PC-9 (cell line): ENCODE measurements at regions of chr10 and their contacts with region 1.

Region 1: DNA sequence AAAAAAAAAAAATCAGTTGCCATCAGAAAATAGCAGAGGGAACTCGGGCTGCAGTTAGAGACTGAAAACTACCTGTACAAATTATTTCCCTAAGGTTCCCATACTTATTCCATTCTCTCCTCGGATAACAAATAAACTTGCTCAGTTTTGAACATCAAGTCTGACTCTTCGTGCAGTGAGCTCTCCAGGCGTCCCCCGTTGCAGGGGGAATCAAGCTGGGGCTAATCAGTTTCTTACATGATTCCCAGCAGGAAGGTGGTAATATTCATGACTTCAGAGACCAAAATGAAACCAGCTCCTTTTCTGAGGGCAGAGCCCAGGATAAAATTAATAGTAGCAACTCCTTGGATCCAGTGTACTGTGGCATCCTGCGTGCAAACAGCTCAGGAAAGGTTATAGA is 135.3 kb downstream of the FRMD4A start:
- DNase-seq: no peak
- H3K4me3 ChIP-seq: no peak overlapping the region
- H3K27ac ChIP-seq: no peak overlapping the region
- H3K4me1 ChIP-seq: no peaks in the 10 kb centered on the region
- H3K27me3 ChIP-seq: no peaks in the 10 kb centered on the region
- CTCF ChIP-seq: no peak

Region 2: DNA sequence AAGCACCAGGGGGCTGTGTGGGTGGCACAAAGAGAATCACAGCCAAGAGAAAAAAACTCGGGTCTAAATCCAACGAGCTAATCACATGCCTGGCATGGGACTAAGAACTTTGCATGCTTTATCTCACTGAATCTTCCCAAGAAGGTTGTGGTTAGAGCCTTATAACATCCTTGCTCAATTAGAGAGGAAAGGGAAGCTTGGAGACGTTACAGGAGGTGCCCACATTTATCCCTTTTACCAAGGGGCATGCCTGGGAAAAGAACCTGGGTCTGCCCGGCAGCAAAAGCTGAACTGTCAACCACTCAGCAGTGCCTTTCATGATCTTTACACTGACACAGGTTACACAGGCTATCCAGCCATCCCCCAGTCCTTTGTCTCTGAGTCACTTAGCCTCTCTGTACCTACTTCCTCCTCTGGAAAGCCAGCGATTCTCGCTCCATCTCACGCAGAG is 418.5 kb before region 1 on chr10:
- CTCF ChIA-PET with region 1: no interaction called
- POLR2A ChIA-PET with region 1: no interaction called
- intact Hi-C with region 1: no loop called
- DNase-seq: peak; percentile 20 to 71
- H3K4me3 ChIP-seq: no peak overlapping the region
- H3K27ac ChIP-seq: peak overlapping the region; percentile 16; the same call in 1 of the 2 replicates
- H3K4me1 ChIP-seq: peaks cover 33% of the 10 kb centered on the region
- H3K27me3 ChIP-seq: no peaks in the 10 kb centered on the region
- CTCF ChIP-seq: no peak

Region 3: GRCh38 chr10:13787015-13787421 is 408.4 kb before region 1 on chr10:
- CTCF ChIA-PET with region 1: no interaction called
- POLR2A ChIA-PET with region 1: no interaction called
- intact Hi-C with region 1: loop called (anchors 5 kb)
- DNase-seq: no peak
- H3K4me3 ChIP-seq: no peak overlapping the region
- H3K27ac ChIP-seq: no peak overlapping the region
- H3K4me1 ChIP-seq: peaks cover 15% of the 10 kb centered on the region
- H3K27me3 ChIP-seq: no peaks in the 10 kb centered on the region
- CTCF ChIP-seq: no peak

Region 4: DNA sequence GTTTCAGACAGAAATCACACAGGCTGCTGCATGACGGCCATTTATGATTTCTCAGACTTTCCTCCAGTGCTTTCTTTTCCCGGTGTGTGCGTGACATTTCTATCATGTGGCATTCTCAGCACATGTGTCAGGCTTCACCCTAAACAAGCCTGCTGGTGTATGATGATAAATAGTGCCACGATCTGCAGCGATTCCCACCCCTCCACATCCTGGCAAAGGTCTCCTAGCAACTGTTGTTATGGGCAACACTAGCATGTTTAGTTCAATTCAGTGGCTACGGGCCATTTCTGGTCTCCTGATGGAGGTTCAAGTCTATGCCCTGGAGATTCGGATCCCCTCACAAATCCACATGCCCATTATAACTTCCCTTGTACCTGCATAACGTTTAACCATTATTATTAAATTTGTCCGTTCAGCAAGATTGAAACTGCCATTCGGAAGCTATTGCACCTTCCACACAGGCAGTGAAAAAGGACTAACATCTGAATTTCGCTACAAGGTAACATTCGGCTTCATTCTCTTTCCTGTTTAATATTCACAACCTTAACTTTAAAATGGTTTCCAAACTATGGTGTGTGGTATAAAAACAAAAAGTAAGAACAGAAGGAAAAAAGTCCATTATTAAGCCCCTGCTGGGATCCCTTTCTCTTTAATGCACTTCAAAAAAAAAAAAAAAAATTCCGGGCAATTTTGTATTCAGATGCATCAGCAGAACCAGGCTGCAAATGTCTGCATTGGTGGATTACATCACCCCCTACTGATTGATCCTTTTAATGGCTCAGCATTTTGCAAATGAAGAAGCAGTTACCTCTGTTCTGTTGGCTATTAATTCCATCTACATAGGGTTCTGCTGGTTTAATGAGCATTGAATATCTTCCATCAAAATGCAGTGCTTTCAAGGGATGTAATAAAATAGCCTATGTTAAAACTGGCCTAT is 45.1 kb after region 1 on chr10:
- CTCF ChIA-PET with region 1: no interaction called
- POLR2A ChIA-PET with region 1: no interaction called
- intact Hi-C with region 1: loop called (anchors 2 kb)
- DNase-seq: no peak
- H3K4me3 ChIP-seq: no peak overlapping the region
- H3K27ac ChIP-seq: no peak overlapping the region
- H3K4me1 ChIP-seq: no peaks in the 10 kb centered on the region
- H3K27me3 ChIP-seq: peaks cover 34% of the 10 kb centered on the region
- CTCF ChIP-seq: no peak

Region 5: GRCh38 chr10:14397066-14397465 is 201.6 kb after region 1 on chr10:
- CTCF ChIA-PET with region 1: interaction called, 4 read pairs
- POLR2A ChIA-PET with region 1: no interaction called
- intact Hi-C with region 1: loop called (anchors 5 kb)
- DNase-seq: peak; percentile 73 to 81
- H3K4me3 ChIP-seq: no peak overlapping the region
- H3K27ac ChIP-seq: no peak overlapping the region
- H3K4me1 ChIP-seq: 0 out of 2 replicates have a peak, but pooled peaks cover 4% of the 10 kb centered on the region
- H3K27me3 ChIP-seq: peaks cover 25% of the 10 kb centered on the region
- CTCF ChIP-seq: no peak